Heart left ventricle (tissue), 16 donors: ENCODE measurements at regions of chr10 and their contacts with region 1.

Region 1: GRCh38 chr10:34960983-34961382 is 129.2 kb downstream of the CUL2 start:
- DNase-seq: peak in 4 of 5 donors; percentile 20 to 69 (median 30)
- ATAC-seq: peak; percentile 81 to 96 (median 94)
- H3K4me3 ChIP-seq: no peak overlapping the region
- H3K27ac ChIP-seq: no peak overlapping the region
- H3K4me1 ChIP-seq: no peaks in the 10 kb centered on the region
- H3K27me3 ChIP-seq: no peaks in the 10 kb centered on the region
- CTCF ChIP-seq: peak in 10 of 12 donors; percentile 7 to 57 (median 36)
- POLR2A ChIP-seq: no peak

Region 2: GRCh38 chr10:34489973-34490745 is 470.8 kb before region 1 on chr10:
- intact Hi-C with region 1: no loop called
- DNase-seq: no peak
- ATAC-seq: peak in 1 of 4 donors; percentile 52
- H3K4me3 ChIP-seq: no peak overlapping the region
- H3K27ac ChIP-seq: no peak overlapping the region
- H3K4me1 ChIP-seq: peaks cover 0 to 9% (median 0%) of the 10 kb centered on the region in 12 donors
- H3K27me3 ChIP-seq: no peaks in the 10 kb centered on the region
- CTCF ChIP-seq: no peak
- POLR2A ChIP-seq: no peak

Region 3: GRCh38 chr10:34650156-34650555 is 310.8 kb before region 1 on chr10:
- intact Hi-C with region 1: loop called in 4 of 10 experiments (anchors 5 to 10 kb)
- DNase-seq: no peak
- ATAC-seq: no peak
- H3K4me3 ChIP-seq: no peak overlapping the region
- H3K27ac ChIP-seq: no peak overlapping the region
- H3K4me1 ChIP-seq: peaks cover 0 to 38% (median 26%) of the 10 kb centered on the region in 12 donors
- H3K27me3 ChIP-seq: no peaks in the 10 kb centered on the region
- CTCF ChIP-seq: no peak
- POLR2A ChIP-seq: no peak

Region 4: DNA sequence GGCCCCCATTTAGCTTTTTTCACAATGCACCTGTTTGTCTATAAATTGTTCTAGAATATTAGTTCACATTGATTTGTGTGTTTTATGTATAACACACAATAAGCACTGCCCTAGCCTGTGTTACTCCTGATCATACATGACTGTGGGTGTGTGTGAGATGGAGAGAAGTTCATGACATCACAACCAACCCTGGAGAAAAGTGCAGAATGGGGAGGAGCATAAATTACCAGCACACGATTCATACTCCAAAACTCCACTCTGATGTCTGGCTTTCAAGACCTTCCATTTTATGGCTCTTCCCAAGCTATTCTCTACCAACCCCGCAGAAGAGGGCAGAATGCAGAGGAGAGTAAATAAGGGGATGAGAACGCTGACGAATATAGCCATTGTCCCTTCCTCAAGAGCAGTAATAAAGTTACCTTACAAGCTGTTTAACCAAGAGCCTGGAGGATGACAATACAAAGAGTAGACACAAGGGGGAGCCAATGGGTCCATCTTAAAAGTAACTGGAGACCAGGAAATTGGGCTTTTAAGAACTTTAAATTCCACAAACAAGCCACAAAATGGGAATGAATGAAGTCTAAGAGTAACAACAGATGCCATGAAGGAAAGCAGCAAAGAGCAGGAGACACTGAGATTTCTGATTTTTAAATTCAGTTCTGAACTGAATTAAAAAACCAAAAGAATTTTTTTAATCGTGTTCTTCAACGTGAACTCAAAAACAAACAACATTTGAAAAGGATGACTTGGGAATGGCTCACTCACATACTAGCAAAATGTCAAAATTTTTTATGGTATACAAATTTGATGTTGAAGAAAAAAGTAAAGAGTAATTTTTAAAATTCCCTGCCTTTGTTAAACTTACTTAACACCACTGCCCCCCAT is 305.5 kb before region 1 on chr10:
- intact Hi-C with region 1: loop called in 7 of 10 experiments (anchors 5 to 10 kb)
- DNase-seq: no peak
- ATAC-seq: peak in 1 of 4 donors; percentile 17
- H3K4me3 ChIP-seq: no peak overlapping the region
- H3K27ac ChIP-seq: no peak overlapping the region
- H3K4me1 ChIP-seq: peaks cover 0 to 24% (median 12%) of the 10 kb centered on the region in 12 donors
- H3K27me3 ChIP-seq: no peaks in the 10 kb centered on the region
- CTCF ChIP-seq: peak; percentile 56 to 78 (median 70)
- POLR2A ChIP-seq: no peak

Region 5: DNA sequence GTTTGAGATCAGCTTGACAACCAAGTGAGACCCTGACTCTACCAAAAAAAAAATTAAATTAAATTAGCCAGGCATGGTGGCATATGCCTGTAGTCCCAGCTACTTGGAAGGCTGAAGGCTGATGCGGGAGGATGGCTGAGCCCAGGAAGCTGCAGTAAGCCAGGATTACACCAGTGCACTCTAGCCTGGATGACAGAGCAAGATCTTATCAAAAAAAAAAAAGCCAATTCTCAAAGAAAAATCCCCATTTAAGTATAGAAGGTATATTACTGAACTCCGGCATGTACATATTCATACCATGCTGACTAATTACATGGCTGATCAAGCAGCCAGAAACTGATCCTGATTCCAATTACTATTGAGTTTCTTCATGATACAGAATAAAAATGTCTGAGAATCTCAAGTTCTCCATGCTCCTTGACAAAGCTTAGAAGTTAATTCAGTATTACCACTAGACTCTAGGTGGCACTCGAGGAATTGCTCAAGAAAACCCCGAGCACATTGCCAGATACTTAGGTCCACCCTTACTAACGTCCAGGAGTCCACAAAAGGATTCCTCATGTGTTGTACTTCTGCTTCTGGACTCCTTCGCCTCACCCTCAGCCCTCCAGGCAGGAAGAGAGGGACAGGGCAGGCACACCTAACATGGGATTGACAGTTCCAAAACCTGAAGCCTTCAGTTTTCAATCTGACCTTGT is 294.8 kb before region 1 on chr10:
- intact Hi-C with region 1: loop called in 5 of 10 experiments (anchors 5 to 10 kb)
- DNase-seq: peak in 1 of 5 donors; percentile 36
- ATAC-seq: peak in 3 of 4 donors; percentile 80 to 85 (median 84)
- H3K4me3 ChIP-seq: no peak overlapping the region
- H3K27ac ChIP-seq: no peak overlapping the region
- H3K4me1 ChIP-seq: peaks cover 0 to 23% (median 2%) of the 10 kb centered on the region in 12 donors
- H3K27me3 ChIP-seq: no peaks in the 10 kb centered on the region
- CTCF ChIP-seq: peak; percentile 28 to 67 (median 54)
- POLR2A ChIP-seq: no peak

Region 6: DNA sequence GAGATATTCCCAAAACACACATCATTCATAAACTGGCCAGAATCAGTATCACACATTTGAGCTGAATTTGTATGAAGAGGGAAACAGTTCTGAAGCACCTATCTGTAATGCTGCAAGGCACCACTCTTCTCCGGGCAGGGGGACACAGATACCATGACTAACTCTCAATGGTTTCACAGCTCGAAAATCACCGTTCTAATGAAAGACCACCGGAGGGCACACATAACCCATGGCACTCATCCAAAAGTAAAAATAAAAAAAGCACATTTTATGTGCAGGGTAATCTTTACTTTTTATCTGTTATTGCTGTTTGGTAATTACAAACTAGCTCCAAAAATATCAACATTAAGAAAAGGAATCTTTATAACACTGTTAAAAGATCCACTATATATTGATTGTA is 283.4 kb before region 1 on chr10:
- intact Hi-C with region 1: loop called in 1 of 10 experiments (anchors 10 kb)
- DNase-seq: no peak
- ATAC-seq: no peak
- H3K4me3 ChIP-seq: no peak overlapping the region
- H3K27ac ChIP-seq: no peak overlapping the region
- H3K4me1 ChIP-seq: peaks cover 0 to 23% (median 8%) of the 10 kb centered on the region in 12 donors
- H3K27me3 ChIP-seq: no peaks in the 10 kb centered on the region
- CTCF ChIP-seq: peak in 1 of 12 donors; percentile 6
- POLR2A ChIP-seq: no peak